PC-3 (cell line): ENCODE measurements at regions of chr17 and their contacts with region 1.

Region 1: GRCh38 chr17:37770631-37771518 is 26.0 kb upstream of the HNF1B start:
- DNase-seq: peak; percentile 75
- ATAC-seq: peak; percentile 66
- H3K4me3 ChIP-seq: no peak overlapping the region
- H3K27ac ChIP-seq: no peak overlapping the region
- H3K4me1 ChIP-seq: no peaks in the 10 kb centered on the region
- H3K27me3 ChIP-seq: no peaks in the 10 kb centered on the region
- CTCF ChIP-seq: peak; percentile 74

Region 2: DNA sequence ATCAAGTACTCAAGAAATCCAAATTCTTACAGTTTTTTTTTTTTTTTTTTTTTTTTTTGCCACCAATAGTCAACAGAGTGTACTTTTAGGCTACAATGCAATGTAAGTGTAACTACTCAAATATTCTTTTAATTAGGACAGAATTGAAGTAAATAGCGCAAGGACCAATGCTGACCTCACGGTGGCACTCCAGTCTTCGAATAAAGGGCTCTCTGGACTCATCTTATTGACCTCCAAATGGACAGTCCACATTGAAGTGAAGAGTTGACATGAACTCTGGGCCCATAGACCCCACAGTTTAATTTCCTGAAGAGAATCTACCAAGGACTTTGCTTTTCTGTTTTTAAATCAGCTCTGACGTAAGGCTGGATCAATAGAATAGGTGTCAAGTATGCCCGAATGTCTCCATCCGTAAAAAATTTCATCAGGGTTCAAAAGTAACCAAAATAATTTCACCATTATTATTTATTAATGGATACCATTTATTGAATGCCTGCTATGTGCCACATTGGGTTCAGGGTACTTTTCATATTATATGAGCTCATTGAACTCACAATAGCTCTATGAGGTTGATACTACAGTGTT is 120.4 kb before region 1 on chr17:
- CTCF ChIA-PET with region 1: interaction called, 3 read pairs
- POLR2A ChIA-PET with region 1: no interaction called
- intact Hi-C with region 1: loop called (anchors 1 kb)
- DNase-seq: peak; percentile 46
- ATAC-seq: no peak
- H3K4me3 ChIP-seq: no peak overlapping the region
- H3K27ac ChIP-seq: no peak overlapping the region
- H3K4me1 ChIP-seq: peaks cover 12% of the 10 kb centered on the region
- H3K27me3 ChIP-seq: no peaks in the 10 kb centered on the region
- CTCF ChIP-seq: peak; percentile 62

Region 3: DNA sequence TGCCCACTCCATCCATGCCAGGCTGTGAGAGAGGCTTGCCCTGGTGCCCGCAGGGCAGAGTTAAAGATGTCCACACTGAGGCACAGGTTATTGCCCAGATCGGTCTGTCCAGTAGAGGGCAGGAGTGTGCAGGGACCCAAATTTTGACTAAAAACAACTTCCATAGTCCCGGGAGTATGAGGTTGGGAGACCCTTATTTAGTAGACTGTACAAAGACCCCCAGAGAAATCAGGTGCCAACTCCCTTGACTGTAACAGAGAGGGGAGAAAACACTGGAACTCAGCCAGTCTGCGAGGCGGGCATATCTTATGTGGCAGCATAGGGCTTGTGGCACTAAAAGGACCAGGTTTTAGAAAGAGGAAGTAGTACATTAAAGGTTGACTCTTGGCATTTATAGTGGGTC is 69.4 kb before region 1 on chr17:
- CTCF ChIA-PET with region 1: interaction called, 6 read pairs
- POLR2A ChIA-PET with region 1: no interaction called
- intact Hi-C with region 1: loop called (anchors 1 kb)
- DNase-seq: peak; percentile 38
- ATAC-seq: 0 out of 2 replicates have a peak, but pooled peaks have one; percentile 43
- H3K4me3 ChIP-seq: no peak overlapping the region
- H3K27ac ChIP-seq: no peak overlapping the region
- H3K4me1 ChIP-seq: peaks cover 10% of the 10 kb centered on the region
- H3K27me3 ChIP-seq: no peaks in the 10 kb centered on the region
- CTCF ChIP-seq: peak; percentile 74

Region 4: DNA sequence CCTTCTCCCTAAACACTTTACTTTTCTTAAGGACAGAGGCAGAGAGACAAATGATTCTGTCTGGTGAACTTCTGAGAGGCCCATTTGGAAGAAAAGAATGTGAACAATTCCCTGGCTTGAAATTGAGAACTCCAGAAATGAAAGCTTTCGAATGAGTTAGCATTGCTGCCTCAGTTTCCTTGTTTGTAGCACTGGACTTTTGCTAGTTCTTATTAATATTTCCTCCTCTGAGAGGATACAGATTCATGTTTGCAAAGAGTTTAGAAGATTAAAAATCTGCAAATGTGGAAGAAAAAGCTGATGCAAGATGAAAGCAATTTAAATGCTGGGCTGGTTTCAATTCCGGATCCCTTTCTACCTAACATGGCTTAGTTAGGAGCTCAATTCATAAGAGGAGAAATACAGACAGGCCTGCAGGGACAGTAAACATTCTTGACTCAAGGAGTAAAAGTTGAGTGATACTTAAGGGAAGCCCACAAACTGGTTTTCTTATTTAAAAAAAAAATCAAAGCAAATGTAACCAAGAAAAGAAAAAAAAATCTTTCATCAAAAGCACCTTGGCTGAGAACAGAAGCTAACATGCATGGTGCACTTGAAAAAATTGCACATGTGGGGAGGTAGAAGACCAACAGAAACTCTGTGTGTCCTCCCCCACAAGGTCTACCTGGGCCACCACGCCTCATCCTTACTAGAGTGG is 53.1 kb before region 1 on chr17:
- CTCF ChIA-PET with region 1: no interaction called
- POLR2A ChIA-PET with region 1: no interaction called
- intact Hi-C with region 1: loop called (anchors 5 kb)
- DNase-seq: no peak
- ATAC-seq: peak; percentile 9
- H3K4me3 ChIP-seq: peak overlapping the region; percentile 23
- H3K27ac ChIP-seq: peak overlapping the region; percentile 52
- H3K4me1 ChIP-seq: peaks cover 27% of the 10 kb centered on the region
- H3K27me3 ChIP-seq: no peaks in the 10 kb centered on the region
- CTCF ChIP-seq: no peak